GM10248 (cell line): ENCODE measurements at regions of chr6 and their contacts with region 1.

Region 1: DNA sequence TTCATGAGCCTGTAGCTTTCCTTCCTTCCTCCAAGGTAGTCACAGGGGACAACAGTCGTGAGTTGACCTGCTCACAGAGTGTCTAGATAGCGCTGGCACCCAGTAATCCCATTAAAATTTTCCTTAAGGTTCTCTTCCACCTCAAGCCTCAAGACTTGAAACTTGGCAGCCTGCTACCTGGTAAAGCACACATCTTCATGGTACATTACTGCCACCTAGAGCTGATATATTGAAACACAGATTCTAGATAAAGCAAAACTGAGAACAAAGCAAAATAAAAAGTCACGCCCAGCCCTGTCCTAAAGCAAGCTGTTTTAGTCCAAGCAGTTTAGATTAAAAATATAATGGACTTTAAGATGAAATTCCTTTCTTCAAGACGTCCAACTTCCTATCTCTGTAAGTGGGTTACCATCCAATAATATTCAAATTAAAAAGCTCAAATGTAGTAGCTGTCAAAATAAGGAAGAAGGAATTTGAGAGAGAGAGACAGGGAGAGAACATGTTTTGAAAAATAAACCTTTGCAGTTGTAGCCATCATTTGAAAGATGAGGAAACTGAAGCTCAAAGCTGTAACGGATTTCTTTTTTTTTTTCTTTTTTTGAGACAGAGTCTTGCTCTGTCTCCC is 50.7 kb upstream of the CD83 start:
- DNase-seq: peak; percentile 73
- CTCF ChIP-seq: peak; percentile 56

Region 2: GRCh38 chr6:13795041-13795750 is 271.7 kb before region 1 on chr6:
- CTCF ChIA-PET with region 1: interaction called, 29 read pairs
- POLR2A ChIA-PET with region 1: no interaction called
- DNase-seq: peak; percentile 80
- CTCF ChIP-seq: peak; percentile 94

Region 3: DNA sequence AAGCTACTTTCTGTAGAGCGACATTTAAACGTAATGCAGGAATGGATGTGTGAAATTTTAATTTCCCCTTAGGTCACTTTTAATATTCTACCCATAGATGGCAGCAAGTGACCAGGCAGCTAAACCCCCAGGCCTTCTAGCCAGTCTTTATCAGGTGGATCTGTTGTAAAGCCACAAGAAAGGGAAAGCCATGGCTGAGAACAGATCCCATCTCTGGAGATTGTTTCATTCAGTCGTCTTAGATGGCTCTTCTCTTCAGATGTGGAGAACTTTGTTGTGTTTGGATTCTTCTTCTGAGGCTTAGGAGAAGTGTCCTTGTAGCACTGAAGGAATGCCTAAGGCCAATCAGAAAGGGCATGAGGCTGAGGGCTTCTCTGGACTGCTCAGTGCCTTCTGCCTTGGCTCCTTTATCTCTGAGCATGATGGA is 157.9 kb before region 1 on chr6:
- CTCF ChIA-PET with region 1: interaction called, 109 read pairs
- POLR2A ChIA-PET with region 1: no interaction called
- DNase-seq: peak; percentile 64
- CTCF ChIP-seq: peak; percentile 62

Region 4: GRCh38 chr6:14037402-14038277 is 29.3 kb before region 1 on chr6:
- CTCF ChIA-PET with region 1: interaction called, 209 read pairs
- POLR2A ChIA-PET with region 1: no interaction called
- DNase-seq: no peak
- CTCF ChIP-seq: no peak

Region 5: DNA sequence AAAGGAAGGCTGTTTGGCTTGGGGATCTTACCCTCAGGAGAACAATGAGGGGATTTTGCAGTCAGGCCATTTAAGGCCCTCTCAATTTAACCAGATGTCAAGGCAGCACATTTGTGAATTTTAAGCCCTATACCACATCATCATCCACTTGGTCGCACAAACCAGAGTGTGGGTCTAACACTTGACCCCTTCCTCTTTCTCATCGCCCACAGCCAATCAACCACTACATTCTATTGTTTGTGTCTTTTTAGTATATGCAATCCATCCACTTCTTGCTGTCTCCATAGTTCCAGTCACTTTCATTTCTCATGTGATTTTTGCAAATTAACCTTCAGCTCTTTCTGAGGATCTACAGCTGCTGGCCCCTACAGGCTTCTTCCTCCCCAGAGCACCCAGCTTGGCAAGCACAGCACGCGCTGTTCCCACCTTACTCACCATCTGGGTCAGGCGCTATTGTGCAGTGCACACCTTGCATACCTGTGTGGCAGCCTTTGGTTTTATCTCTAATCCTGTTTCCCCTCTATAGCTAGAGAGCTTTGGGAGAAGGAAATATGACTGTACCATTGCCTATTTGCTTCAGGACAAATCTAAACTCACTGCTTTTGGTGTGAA is 18.4 kb after region 1 on chr6:
- CTCF ChIA-PET with region 1: interaction called, 25 read pairs
- POLR2A ChIA-PET with region 1: no interaction called
- DNase-seq: no peak
- CTCF ChIP-seq: no peak

Region 6: DNA sequence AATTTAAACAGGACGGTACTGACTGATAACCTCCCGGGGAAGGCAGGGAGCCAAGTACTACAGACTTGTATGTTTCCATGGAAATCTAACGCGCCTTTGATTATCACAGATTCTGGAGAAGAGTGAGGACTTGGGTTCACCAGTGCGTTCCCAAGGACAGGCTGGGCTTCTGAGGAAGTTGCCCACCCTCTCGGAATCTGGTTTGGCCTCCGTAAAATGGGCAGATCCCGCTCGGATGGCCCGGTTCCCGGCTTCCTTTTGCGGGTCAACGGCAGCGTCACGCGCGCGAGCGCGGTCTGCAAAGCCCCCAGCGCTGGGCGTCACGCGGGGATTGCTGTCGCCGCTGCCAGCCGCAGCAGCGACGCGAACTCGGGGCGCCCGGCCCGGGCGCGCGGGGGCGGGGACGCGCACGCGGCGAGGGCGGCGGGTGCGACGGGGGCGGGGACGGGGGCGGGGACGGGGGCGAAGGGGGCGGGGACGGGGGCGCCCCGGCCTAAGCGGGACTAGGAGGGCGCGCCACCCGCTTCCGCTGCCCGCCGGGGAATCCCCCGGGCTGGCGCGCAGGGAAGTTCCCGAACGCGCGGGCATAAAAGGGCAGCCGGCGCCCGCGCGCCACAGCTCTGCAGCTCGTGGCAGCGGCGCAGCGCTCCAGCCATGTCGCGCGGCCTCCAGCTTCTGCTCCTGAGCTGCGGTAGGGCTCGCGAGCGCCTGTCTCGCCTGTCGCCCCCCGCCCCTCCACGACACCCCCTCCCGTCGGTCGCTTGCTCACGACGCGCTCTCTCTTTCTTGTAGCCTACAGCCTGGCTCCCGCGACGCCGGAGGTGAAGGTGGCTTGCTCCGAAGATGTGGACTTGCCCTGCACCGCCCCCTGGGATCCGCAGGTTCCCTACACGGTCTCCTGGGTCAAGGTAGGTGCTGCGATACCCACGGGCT is 50.5 kb after region 1 on chr6 and contains the start of gene CD83:
- CTCF ChIA-PET with region 1: interaction called, 13 read pairs
- POLR2A ChIA-PET with region 1: no interaction called
- DNase-seq: peak; percentile 92
- CTCF ChIP-seq: peak; percentile 29

Region 7: GRCh38 chr6:14144678-14145113 is 77.8 kb after region 1 on chr6:
- CTCF ChIA-PET with region 1: interaction called, 10 read pairs
- POLR2A ChIA-PET with region 1: no interaction called
- DNase-seq: peak; percentile 87
- CTCF ChIP-seq: peak; percentile 92

Region 8: GRCh38 chr6:14647357-14647756 is 580.5 kb after region 1 on chr6:
- CTCF ChIA-PET with region 1: no interaction called
- POLR2A ChIA-PET with region 1: no interaction called
- DNase-seq: no peak
- CTCF ChIP-seq: no peak